CD8-positive, alpha-beta T cell (primary cell): ENCODE measurements at regions of chr19 and their contacts with region 1.

Region 1: DNA sequence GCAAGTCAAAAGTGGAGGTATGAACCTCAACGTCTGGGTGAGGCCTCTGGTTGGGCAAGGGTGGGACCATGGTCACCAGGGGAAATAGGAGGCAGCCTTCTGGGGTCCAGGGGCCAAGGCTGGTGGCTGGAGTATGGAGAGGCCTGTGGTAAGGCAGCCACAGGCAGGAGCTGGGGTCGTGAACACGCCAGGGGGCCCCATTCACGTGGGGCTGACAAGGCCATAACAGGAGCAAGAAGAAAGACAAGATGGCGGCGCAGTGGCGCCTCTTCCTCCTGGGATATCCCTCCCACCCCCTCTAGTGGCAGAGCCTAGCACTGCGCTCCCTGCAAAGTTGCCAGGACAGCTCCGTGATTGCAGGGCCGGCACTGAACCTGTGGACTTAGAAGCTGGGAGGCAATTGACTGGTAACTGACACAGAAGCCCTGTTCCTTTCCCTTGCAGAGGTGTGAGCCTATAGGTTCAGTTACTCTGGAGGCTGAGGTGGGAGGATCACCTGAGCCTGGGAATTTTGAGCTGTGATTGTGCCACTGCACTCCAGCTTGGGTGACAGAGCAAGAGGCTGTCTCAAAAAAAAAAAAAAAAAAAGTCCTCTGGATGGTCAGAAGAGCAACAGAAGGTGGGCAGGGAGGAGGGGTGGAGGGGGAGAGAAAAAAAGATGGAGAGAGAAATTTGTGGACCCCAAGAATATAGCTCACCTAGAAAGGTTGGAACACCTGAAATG is 19.7 kb upstream of the EDDM13 start:
- DNase-seq: peak; percentile 35 to 75 (median 69)
- ATAC-seq: peak; percentile 80
- H3K4me3 ChIP-seq: no peak overlapping the region
- H3K4me3 Mint-ChIP-seq: no peak overlapping the region
- H3K27ac ChIP-seq: no peak overlapping the region
- H3K27ac Mint-ChIP-seq: no peak overlapping the region
- H3K4me1 ChIP-seq: no peaks in the 10 kb centered on the region
- H3K4me1 Mint-ChIP-seq: no peaks in the 10 kb centered on the region
- H3K27me3 ChIP-seq: no peaks in the 10 kb centered on the region
- H3K27me3 Mint-ChIP-seq: no peaks in the 10 kb centered on the region
- CTCF ChIP-seq: peak; percentile 65

Region 2: GRCh38 chr19:56080669-56081401 is 172.0 kb before region 1 on chr19:
- CTCF ChIA-PET with region 1: interaction called, 10 read pairs
- POLR2A ChIA-PET with region 1: no interaction called
- intact Hi-C with region 1: no loop called
- DNase-seq: peak; percentile 46 to 77 (median 67)
- ATAC-seq: peak; percentile 67
- H3K4me3 ChIP-seq: peak overlapping the region; percentile 41 to 46
- H3K4me3 Mint-ChIP-seq: peak overlapping the region; percentile 76
- H3K27ac ChIP-seq: no peak overlapping the region
- H3K27ac Mint-ChIP-seq: no peak overlapping the region
- H3K4me1 ChIP-seq: peaks cover 8% of the 10 kb centered on the region
- H3K4me1 Mint-ChIP-seq: peaks cover 9% of the 10 kb centered on the region
- H3K27me3 ChIP-seq: no peaks in the 10 kb centered on the region
- H3K27me3 Mint-ChIP-seq: peaks cover 12% of the 10 kb centered on the region
- CTCF ChIP-seq: no peak

Region 3: DNA sequence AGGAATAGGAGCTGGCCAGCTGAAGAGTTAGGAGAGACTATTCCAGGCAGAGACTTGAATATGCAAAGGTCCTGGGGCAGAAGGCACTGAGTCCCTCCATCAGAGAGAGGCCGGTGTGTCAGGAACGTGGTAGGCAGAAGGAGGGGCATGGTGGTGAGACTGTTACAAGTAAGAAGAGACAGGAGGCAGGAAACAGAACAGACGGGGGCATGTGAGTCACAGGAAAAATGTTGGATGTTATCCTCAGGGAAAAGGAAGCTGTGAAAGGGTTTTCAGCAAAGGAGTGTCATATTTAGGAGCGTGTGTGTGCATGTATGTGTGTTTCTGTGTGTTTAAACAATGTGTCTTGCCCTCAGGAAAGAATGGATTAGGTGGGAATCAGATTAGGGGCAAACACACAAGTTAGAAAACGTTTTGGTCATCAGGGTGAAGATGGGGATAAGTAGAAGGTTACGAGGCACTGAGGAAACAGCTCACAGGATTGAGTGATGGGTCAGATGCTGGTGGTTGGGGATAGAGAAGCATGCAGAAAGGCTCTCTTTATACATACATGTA is 20.8 kb after region 1 on chr19:
- CTCF ChIA-PET with region 1: interaction called, 11 read pairs
- POLR2A ChIA-PET with region 1: no interaction called
- intact Hi-C with region 1: no loop called
- DNase-seq: no peak
- ATAC-seq: no peak
- H3K4me3 ChIP-seq: no peak overlapping the region
- H3K4me3 Mint-ChIP-seq: no peak overlapping the region
- H3K27ac ChIP-seq: no peak overlapping the region
- H3K27ac Mint-ChIP-seq: no peak overlapping the region
- H3K4me1 ChIP-seq: no peaks in the 10 kb centered on the region
- H3K4me1 Mint-ChIP-seq: no peaks in the 10 kb centered on the region
- H3K27me3 ChIP-seq: no peaks in the 10 kb centered on the region
- H3K27me3 Mint-ChIP-seq: no peaks in the 10 kb centered on the region
- CTCF ChIP-seq: no peak

Region 4: GRCh38 chr19:56350416-56351045 is 97.7 kb after region 1 on chr19:
- CTCF ChIA-PET with region 1: interaction called, 20 read pairs
- POLR2A ChIA-PET with region 1: no interaction called
- intact Hi-C with region 1: loop called (anchors 1 kb)
- DNase-seq: peak in 8 of 9 experiments; percentile 14 to 71 (median 55)
- ATAC-seq: peak; percentile 68
- H3K4me3 ChIP-seq: no peak overlapping the region
- H3K4me3 Mint-ChIP-seq: no peak overlapping the region
- H3K27ac ChIP-seq: no peak overlapping the region
- H3K27ac Mint-ChIP-seq: no peak overlapping the region
- H3K4me1 ChIP-seq: no peaks in the 10 kb centered on the region
- H3K4me1 Mint-ChIP-seq: peaks cover 2% of the 10 kb centered on the region
- H3K27me3 ChIP-seq: no peaks in the 10 kb centered on the region
- H3K27me3 Mint-ChIP-seq: no peaks in the 10 kb centered on the region
- CTCF ChIP-seq: peak; percentile 96

Region 5: GRCh38 chr19:57227502-57227901 is 974.6 kb after region 1 on chr19:
- CTCF ChIA-PET with region 1: no interaction called
- POLR2A ChIA-PET with region 1: no interaction called
- intact Hi-C with region 1: no loop called
- DNase-seq: no peak
- ATAC-seq: no peak
- H3K4me3 ChIP-seq: no peak overlapping the region
- H3K4me3 Mint-ChIP-seq: no peak overlapping the region
- H3K27ac ChIP-seq: no peak overlapping the region
- H3K27ac Mint-ChIP-seq: no peak overlapping the region
- H3K4me1 ChIP-seq: no peaks in the 10 kb centered on the region
- H3K4me1 Mint-ChIP-seq: no peaks in the 10 kb centered on the region
- H3K27me3 ChIP-seq: peaks cover 0 to 2% of the 10 kb centered on the region in 2 experiments
- H3K27me3 Mint-ChIP-seq: no peaks in the 10 kb centered on the region
- CTCF ChIP-seq: no peak